Breast epithelium (tissue), 4 donors: ENCODE measurements at regions of chr11 and their contacts with region 1.

Region 1: GRCh38 chr11:36109850-36110606 is 166.2 kb downstream of the LDLRAD3 start:
- DNase-seq: no peak
- H3K4me3 ChIP-seq: no peak overlapping the region
- H3K27ac ChIP-seq: no peak overlapping the region
- H3K4me1 ChIP-seq: peaks cover 0 to 5% of the 10 kb centered on the region in 2 donors
- H3K27me3 ChIP-seq: no peaks in the 10 kb centered on the region
- CTCF ChIP-seq: no peak
- POLR2A ChIP-seq: no peak

Region 2: DNA sequence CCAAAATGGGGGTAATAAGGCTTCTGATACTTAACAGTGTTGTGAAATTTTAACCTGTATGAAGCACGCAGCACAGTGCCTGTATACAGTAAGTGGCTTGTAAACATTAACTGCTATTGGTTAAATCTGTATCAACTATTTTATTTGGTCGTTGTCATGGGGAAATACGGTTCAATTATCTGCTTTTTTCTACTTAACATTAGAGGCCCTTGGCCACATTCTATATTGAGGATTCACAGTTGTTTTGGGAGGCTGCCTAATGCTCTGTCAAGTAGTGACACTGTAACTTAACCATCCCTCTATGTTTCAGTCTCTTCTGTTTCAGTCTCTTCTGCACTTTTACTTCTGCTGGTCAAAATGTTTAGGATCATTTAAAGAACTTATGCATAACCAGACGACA is 70.6 kb before region 1 on chr11:
- intact Hi-C with region 1: loop called (anchors 2 kb)
- DNase-seq: no peak
- H3K4me3 ChIP-seq: no peak overlapping the region
- H3K27ac ChIP-seq: no peak overlapping the region
- H3K4me1 ChIP-seq: no peaks in the 10 kb centered on the region
- H3K27me3 ChIP-seq: no peaks in the 10 kb centered on the region
- CTCF ChIP-seq: no peak
- POLR2A ChIP-seq: no peak

Region 3: GRCh38 chr11:36069576-36070212 is 40.3 kb before region 1 on chr11:
- intact Hi-C with region 1: no loop called
- DNase-seq: peak in 1 of 2 donors; percentile 40
- H3K4me3 ChIP-seq: no peak overlapping the region
- H3K27ac ChIP-seq: peak overlapping the region in 1 of 2 donors; percentile 0
- H3K4me1 ChIP-seq: no peaks in the 10 kb centered on the region
- H3K27me3 ChIP-seq: no peaks in the 10 kb centered on the region
- CTCF ChIP-seq: peak in 2 of 3 donors; percentile 38 to 47
- POLR2A ChIP-seq: no peak

Region 4: DNA sequence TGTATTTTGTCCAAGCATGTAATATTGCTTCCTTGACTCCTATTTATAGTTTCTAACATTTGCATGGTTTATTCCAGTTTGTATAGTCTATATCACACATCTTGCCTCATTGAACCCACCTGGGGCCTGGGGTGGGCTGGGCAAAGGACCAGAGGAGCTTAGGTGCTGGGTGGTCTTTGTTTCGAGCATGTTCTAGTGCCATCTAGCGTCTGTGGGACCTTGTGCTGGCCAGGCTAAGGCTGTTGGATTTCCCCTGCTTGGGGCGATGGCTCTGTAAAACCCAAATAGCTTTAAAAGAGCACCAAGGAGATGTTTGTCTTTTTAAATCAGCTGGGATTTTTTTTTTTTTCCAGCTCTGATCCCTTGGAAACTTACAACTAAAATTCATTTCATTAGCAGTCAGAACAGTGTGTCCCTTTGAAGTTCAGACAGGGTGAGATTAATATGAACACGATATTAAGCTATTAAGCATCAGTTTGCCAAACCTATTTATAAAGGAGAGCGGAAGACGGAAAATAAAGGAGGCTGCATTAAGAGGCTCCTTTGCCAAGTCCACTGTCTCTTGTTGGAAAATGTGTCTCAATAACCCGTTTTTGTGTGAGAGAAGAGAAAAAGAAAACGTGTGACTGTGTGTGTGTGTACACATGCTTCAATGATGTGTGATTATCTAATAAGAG is 21.8 kb after region 1 on chr11:
- intact Hi-C with region 1: loop called (anchors 1 kb)
- DNase-seq: peak in 1 of 2 donors; percentile 55
- H3K4me3 ChIP-seq: no peak overlapping the region
- H3K27ac ChIP-seq: peak overlapping the region in 1 of 2 donors; percentile 22
- H3K4me1 ChIP-seq: no peaks in the 10 kb centered on the region
- H3K27me3 ChIP-seq: no peaks in the 10 kb centered on the region
- CTCF ChIP-seq: peak; percentile 27 to 39 (median 36)
- POLR2A ChIP-seq: no peak